ENCODE measurements at regions of chr17 and their contacts with region 1.

Region 1: GRCh38 chr17:9432934-9433421 is 142.6 kb downstream of the STX8 start:
- DNase-seq: no peak
- H3K4me3 ChIP-seq: no peak overlapping the region
- H3K27ac ChIP-seq: no peak overlapping the region
- H3K4me1 ChIP-seq: no peaks in the 10 kb centered on the region
- CTCF ChIP-seq: no peak

Region 2: DNA sequence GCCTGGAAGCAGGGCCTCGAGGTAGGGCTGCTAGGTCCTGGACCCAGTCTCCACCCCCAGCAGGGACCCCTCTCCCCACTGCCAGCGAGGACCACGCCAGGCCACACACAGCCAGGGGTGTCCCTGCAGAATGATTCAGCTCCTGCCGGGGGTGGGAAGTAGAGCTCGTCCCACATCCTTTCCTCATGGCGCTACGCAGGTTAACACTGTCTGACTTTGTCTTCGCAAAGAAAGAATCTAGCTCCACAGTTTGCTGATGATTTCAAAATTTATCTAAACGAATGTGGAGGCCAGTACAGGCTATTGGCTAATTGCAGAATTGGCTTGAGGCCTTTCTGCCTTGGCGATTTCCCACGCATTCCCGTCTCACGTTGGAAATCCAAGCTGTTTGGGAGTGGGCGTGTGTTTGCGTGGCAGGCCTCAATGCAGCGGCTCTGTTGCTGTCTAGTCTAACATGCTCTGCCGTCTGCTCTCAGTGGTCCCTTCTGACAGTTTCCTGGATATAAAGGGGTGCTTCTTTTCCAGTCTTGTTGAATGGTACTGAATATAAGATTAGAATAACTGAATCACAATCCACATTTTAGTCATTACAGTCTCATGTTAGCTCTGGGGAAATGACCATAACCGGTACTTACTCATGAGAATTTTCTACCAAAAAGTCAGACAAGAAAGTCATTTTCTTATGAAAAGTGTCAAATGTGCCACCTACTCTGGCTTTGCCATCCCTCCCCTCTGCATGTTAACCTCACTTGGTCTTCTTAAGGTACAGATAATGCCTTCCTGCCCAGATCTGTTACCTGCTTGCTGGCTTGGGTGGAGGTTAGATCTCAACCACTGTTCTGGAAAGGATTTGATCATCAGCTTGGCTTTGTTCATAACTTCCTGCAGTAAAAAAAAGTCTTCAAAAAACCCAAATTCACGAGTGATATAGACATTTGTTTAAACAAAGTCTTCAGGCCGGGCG is 159.3 kb before region 1 on chr17:
- CTCF ChIA-PET with region 1: interaction called, 22 read pairs
- POLR2A ChIA-PET with region 1: no interaction called
- intact Hi-C with region 1: no loop called
- DNase-seq: no peak
- H3K4me3 ChIP-seq: no peak overlapping the region
- H3K27ac ChIP-seq: no peak overlapping the region
- H3K4me1 ChIP-seq: no peaks in the 10 kb centered on the region
- CTCF ChIP-seq: no peak

Region 3: DNA sequence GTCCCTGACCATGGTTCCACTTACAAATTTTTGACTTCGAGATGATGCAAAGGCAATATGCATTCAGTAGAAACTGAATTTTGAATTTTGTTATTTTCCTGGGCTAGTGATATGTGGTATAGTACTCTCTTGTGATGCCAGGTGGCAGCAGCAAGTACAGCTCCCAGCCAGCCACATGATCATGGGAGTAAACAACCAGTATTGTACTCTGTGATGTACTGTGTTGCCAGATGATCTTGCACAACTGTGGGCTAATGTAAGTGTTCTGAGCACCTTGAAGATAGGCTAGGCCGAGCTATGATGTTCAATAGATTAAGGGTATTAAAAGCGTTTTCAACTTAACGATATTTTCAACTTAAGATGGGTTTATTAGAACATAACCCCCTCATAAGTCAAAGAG is 108.1 kb before region 1 on chr17:
- CTCF ChIA-PET with region 1: no interaction called
- POLR2A ChIA-PET with region 1: no interaction called
- intact Hi-C with region 1: no loop called
- DNase-seq: no peak
- H3K4me3 ChIP-seq: no peak overlapping the region
- H3K27ac ChIP-seq: no peak overlapping the region
- H3K4me1 ChIP-seq: no peaks in the 10 kb centered on the region
- CTCF ChIP-seq: no peak